CD14-positive monocyte (primary cell): ENCODE measurements at regions of chr4 and their contacts with region 1.

Region 1: GRCh38 chr4:47933840-47934239 is 19.5 kb upstream of the NFXL1 start:
- DNase-seq: peak; percentile 38 to 64 (median 50)
- H3K4me3 ChIP-seq: no peak overlapping the region
- H3K4me3 Mint-ChIP-seq: no peak overlapping the region
- H3K27ac ChIP-seq: no peak overlapping the region
- H3K27ac Mint-ChIP-seq: no peak overlapping the region
- H3K4me1 ChIP-seq: peaks cover 3 to 9% of the 10 kb centered on the region in 2 donors
- H3K4me1 Mint-ChIP-seq: peaks cover 9% of the 10 kb centered on the region
- H3K27me3 ChIP-seq: no peaks in the 10 kb centered on the region
- H3K27me3 Mint-ChIP-seq: peaks cover 3 to 5% (median 5%) of the 10 kb centered on the region in 3 donors
- CTCF ChIP-seq: peak; percentile 77

Region 2: DNA sequence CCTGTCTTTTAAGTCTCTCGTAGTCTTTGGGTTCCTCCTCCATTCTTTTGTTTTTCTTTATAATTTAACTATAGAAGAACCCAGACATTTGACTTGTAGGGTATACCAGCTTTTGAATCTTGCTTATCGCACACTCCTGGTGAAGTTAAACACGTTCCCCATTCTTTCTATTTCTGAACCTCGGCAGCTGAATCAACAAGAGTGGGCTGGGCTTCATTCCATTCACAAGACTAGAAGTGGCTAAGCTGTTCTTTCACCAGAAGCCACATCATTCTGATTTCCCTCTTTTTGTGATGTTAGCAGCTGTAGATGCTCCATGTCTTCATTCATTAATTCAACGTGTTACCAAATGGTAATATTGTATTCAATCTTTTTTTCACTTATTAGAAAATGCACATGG is 263.9 kb before region 1 on chr4:
- intact Hi-C with region 1: loop called in 1 of 2 experiments (anchors 5 kb)
- DNase-seq: no peak
- H3K4me3 ChIP-seq: no peak overlapping the region
- H3K4me3 Mint-ChIP-seq: no peak overlapping the region
- H3K27ac ChIP-seq: no peak overlapping the region
- H3K27ac Mint-ChIP-seq: no peak overlapping the region
- H3K4me1 ChIP-seq: no peaks in the 10 kb centered on the region
- H3K4me1 Mint-ChIP-seq: peaks cover 2% of the 10 kb centered on the region
- H3K27me3 ChIP-seq: no peaks in the 10 kb centered on the region
- H3K27me3 Mint-ChIP-seq: peaks cover 0 to 1% (median 0%) of the 10 kb centered on the region in 3 donors
- CTCF ChIP-seq: no peak

Region 3: GRCh38 chr4:47686294-47686872 is 247.5 kb before region 1 on chr4:
- intact Hi-C with region 1: loop called (anchors 2 to 5 kb)
- DNase-seq: peak; percentile 49 to 57 (median 51)
- H3K4me3 ChIP-seq: no peak overlapping the region
- H3K4me3 Mint-ChIP-seq: no peak overlapping the region
- H3K27ac ChIP-seq: no peak overlapping the region
- H3K27ac Mint-ChIP-seq: no peak overlapping the region
- H3K4me1 ChIP-seq: no peaks in the 10 kb centered on the region
- H3K4me1 Mint-ChIP-seq: peaks cover 2% of the 10 kb centered on the region
- H3K27me3 ChIP-seq: peaks cover 0 to 4% of the 10 kb centered on the region in 2 donors
- H3K27me3 Mint-ChIP-seq: peaks cover 2 to 11% (median 4%) of the 10 kb centered on the region in 3 donors
- CTCF ChIP-seq: peak; percentile 92